ENCODE measurements at regions of chr5 and their contacts with region 1.

Region 1: GRCh38 chr5:145752947-145753346 is 82.2 kb downstream of the PRELID2 start:
- DNase-seq: no peak
- H3K4me3 ChIP-seq: no peak overlapping the region
- H3K27ac ChIP-seq: no peak overlapping the region
- H3K4me1 ChIP-seq: no peaks in the 10 kb centered on the region
- H3K27me3 ChIP-seq: no peaks in the 10 kb centered on the region
- CTCF ChIP-seq: no peak

Region 2: DNA sequence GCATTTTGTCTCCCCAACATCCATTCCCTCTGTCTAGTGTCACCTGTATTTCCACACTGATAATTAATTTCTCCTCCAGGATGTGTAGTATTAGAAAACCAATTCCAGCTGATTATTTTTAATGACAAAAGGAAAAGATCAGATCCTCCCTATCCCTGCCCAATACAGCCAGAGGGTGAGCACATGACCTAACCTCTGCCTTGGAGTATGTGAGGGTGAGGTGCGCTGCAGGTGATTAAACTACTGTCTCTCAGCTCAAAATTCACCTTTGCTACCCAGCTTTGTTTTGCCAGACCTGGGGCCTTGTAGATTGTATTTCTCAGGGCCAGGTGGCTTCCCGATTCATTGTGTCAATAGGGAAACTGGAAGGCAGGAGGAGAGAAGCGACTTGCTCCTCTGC is 319.9 kb before region 1 on chr5:
- CTCF ChIA-PET with region 1: no interaction called
- dilution Hi-C with region 1: no loop called
- in situ Hi-C with region 1: no loop called
- intact Hi-C with region 1: no loop called
- DNase-seq: no peak
- H3K4me3 ChIP-seq: no peak overlapping the region
- H3K27ac ChIP-seq: no peak overlapping the region
- H3K4me1 ChIP-seq: no peaks in the 10 kb centered on the region
- H3K27me3 ChIP-seq: no peaks in the 10 kb centered on the region
- CTCF ChIP-seq: no peak

Region 3: DNA sequence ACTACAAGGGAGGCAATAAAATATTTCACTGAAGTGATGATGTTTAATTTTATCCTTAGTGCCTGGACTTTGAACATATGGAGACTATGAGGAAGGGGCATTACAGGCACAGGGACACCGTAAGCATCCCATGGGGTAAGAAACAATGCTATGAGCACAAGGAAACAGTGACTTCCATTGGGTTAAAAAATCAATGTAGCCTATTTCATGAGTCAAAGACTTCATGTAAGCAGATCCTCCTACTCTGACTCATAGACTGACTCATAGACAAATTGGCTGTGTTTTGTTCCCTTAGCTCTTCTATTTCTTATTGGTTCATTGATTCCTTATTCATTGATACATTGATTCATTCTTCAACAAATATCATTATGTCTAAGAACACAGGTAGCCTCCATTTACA is 268.8 kb before region 1 on chr5:
- CTCF ChIA-PET with region 1: no interaction called
- dilution Hi-C with region 1: no loop called
- in situ Hi-C with region 1: no loop called
- intact Hi-C with region 1: no loop called
- DNase-seq: peak; percentile 74
- H3K4me3 ChIP-seq: no peak overlapping the region
- H3K27ac ChIP-seq: peak overlapping the region; percentile 44
- H3K4me1 ChIP-seq: peaks cover 22% of the 10 kb centered on the region
- H3K27me3 ChIP-seq: no peaks in the 10 kb centered on the region
- CTCF ChIP-seq: no peak

Region 4: DNA sequence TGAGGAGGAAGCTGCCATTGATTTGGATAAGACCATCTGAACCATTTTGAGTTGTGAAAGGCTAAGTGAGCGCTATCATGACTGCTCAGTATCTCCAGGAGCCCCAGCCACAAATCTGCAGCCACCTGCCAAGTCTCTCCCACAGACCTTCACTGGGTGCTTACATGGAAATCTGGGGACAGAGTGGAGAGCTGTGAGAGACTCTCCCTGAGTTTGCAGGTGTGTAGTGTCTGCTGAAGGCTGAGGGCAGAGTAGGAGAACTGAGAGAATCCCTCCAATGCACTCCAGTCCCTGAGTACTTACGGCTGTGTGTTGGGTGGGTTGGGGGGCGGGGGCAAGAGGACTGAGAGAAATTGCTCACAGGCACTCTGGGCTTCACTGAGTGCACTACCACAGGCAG is 41.5 kb before region 1 on chr5:
- CTCF ChIA-PET with region 1: interaction called, 10 read pairs
- dilution Hi-C with region 1: no loop called
- in situ Hi-C with region 1: no loop called
- intact Hi-C with region 1: no loop called
- DNase-seq: no peak
- H3K4me3 ChIP-seq: no peak overlapping the region
- H3K27ac ChIP-seq: no peak overlapping the region
- H3K4me1 ChIP-seq: no peaks in the 10 kb centered on the region
- H3K27me3 ChIP-seq: no peaks in the 10 kb centered on the region
- CTCF ChIP-seq: no peak

Region 5: DNA sequence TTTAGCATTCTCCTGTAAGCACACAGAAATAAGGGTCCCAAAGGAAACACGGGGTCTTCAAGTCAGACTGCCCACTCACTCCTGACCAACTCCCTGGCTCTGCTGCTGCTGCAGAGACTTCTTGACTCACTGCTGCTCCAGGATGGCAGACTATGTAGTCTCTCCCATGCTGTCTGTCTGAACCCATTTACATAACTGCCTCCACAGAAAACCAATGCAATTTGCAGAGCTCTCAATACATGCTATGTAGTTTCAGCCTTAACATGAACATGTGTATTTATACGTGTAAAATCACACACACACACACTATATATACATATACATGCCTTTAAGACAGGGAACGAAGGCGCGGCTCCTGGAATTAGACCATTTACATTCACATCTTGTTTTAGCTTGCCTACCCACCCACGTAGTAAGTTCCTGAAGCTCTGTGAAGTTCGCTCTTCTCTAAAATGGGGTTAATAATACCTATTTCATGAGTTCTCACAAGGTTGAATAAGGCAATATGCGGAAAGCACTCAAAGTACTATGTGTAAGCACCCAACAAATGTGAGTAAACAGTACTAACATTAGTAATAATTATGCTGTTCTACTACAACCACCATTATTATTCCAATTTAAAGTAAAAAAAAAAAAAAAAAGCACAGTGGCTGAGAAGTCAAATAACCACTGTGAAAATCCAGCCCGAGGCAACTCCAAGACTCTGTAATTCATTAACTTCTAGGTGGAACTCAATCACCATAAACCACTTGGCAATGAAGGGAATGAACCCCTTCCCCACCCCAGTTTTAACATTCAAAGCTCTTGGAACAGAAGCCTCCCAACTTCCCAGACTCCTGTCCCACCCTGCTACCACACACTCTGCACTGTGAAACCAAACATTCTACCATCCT is 50.4 kb after region 1 on chr5:
- CTCF ChIA-PET with region 1: no interaction called
- dilution Hi-C with region 1: loop called (anchors 5 kb)
- in situ Hi-C with region 1: no loop called
- intact Hi-C with region 1: no loop called
- DNase-seq: peak; percentile 13
- H3K4me3 ChIP-seq: no peak overlapping the region
- H3K27ac ChIP-seq: no peak overlapping the region
- H3K4me1 ChIP-seq: peaks cover 5% of the 10 kb centered on the region
- H3K27me3 ChIP-seq: no peaks in the 10 kb centered on the region
- CTCF ChIP-seq: no peak

Measured in mammary epithelial cell (primary cell).